ENCODE measurements at regions of chr2 and their contacts with region 1.

Region 1: GRCh38 chr2:174697255-174697654 is 67.0 kb downstream of the CHRNA1 start:
- DNase-seq: no peak
- H3K4me3 ChIP-seq: no peak overlapping the region
- CTCF ChIP-seq: peak; percentile 87

Region 2: DNA sequence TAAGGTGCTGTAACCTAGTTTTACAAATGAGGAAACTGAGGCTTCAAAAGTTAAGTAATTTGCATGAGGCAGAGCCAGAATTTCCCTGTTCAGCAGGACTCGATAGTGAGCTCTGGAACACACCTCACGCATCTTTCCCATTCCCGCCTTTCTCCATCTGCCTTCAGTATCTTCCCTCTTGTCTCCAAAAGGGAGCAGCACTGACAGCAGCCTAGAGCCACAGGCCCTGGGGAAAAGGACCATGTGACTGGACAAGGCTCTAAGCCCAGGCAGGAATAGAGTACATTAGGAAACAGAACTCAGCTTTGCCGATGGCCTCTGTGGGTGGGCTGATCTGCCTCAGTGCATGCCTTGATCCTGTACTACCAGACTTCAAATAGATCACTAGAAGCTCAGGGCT is 231.9 kb before region 1 on chr2:
- CTCF ChIA-PET with region 1: interaction called, 10 read pairs
- POLR2A ChIA-PET with region 1: no interaction called
- DNase-seq: no peak
- H3K4me3 ChIP-seq: no peak overlapping the region
- CTCF ChIP-seq: no peak

Region 3: GRCh38 chr2:174717273-174717672 is 20.0 kb after region 1 on chr2:
- CTCF ChIA-PET with region 1: interaction called, 101 read pairs
- POLR2A ChIA-PET with region 1: no interaction called
- DNase-seq: peak; percentile 31
- H3K4me3 ChIP-seq: no peak overlapping the region
- CTCF ChIP-seq: no peak

Region 4: GRCh38 chr2:174764280-174765255 is 67.3 kb after region 1 on chr2 and contains the start of gene CHRNA1:
- CTCF ChIA-PET with region 1: interaction called, 36 read pairs
- POLR2A ChIA-PET with region 1: no interaction called
- DNase-seq: no peak
- H3K4me3 ChIP-seq: no peak within 1 kb of the TSS
- CTCF ChIP-seq: no peak

Region 5: DNA sequence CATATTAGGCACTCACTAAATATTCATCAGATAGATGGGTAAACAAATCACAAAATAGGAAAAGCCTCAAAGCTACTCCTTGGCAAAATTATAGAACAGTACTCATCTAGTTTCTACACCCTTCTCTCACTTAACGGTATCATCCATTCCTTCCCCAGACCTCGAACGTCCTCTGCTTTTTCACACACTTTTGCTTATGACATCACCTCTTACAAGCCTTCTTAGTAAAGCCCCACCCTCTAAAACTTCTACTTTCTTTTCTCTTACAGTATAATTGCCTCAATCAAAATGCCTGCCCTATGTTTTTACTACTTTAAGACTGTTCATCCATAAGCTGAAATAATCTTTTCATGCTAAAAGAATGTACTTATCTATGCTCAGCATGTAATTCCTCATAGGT is 299.9 kb after region 1 on chr2:
- CTCF ChIA-PET with region 1: interaction called, 88 read pairs
- POLR2A ChIA-PET with region 1: no interaction called
- DNase-seq: no peak
- H3K4me3 ChIP-seq: no peak overlapping the region
- CTCF ChIP-seq: no peak

Region 6: DNA sequence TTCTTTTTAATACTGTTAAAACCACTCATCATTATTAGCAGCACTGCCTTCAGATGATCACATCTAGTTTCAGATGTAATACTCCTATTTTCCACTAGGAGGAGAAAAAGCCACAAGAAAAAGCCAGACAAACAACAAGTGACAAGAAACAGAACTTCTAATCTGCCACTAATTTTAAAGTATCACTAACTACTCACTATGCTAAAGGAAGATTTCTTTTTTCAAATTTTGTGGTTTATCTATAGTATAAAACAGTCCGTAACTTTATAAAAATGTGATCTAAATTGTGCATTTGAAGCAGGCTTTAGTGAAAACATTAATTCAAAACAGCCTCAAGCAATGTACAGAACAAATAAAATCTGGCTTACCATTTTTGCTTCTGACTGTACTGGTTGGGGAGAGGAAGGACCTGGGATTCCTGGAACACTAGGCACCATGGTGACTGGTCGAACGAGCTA is 414.0 kb after region 1 on chr2:
- CTCF ChIA-PET with region 1: interaction called, 16 read pairs
- POLR2A ChIA-PET with region 1: no interaction called
- DNase-seq: peak; percentile 9
- H3K4me3 ChIP-seq: no peak overlapping the region
- CTCF ChIP-seq: peak; percentile 8

Region 7: DNA sequence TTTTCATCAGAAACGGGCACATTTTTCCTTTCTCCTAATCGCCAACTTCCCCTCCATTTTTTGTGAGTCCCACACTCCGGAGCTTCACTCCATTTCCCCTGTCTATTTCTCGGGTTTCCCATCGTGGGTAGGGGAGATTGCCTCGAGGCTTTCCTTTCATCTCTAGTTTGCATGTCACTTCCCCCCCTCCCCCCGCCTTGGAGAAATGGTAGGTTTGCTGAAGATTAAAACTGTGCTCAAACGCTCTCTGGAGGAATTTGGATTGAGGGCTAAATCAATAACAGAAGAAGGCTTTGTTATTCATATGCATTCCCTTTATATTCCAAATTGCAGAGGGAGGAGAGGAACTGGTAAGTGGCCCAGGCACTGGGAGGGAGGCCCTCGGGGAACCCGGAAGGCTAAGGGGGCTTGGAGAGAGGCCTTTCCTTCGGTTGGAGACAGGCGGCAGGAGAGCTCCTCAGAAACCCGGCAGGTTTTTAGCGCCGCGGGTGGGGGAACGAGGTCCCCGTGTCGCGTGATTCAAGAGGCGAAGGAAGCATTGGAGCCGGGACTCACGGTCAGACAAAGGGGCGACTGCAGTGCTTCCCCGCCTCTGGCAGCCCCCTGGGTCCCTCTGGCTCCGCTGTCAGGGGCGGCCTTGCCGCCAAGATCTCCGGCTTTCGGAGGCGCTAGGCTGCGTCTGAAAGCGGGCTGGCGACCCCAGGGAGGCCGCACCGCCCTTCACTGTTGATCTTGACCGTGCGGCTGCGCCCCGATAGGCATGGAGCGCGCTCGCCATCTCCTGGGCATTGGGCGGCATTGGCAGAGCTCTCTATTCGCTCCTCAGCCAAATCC is 1399.9 kb after region 1 on chr2:
- CTCF ChIA-PET with region 1: interaction called, 20 read pairs
- POLR2A ChIA-PET with region 1: no interaction called
- DNase-seq: no peak
- H3K4me3 ChIP-seq: peak overlapping the region; percentile 45
- CTCF ChIP-seq: peak; percentile 91